Activated CD8-positive, alpha-beta T cell treated with anti-CD3 and anti-CD28 coated beads for 36 hours (primary cell): ENCODE measurements at regions of chr4 and their contacts with region 1.

Region 1: DNA sequence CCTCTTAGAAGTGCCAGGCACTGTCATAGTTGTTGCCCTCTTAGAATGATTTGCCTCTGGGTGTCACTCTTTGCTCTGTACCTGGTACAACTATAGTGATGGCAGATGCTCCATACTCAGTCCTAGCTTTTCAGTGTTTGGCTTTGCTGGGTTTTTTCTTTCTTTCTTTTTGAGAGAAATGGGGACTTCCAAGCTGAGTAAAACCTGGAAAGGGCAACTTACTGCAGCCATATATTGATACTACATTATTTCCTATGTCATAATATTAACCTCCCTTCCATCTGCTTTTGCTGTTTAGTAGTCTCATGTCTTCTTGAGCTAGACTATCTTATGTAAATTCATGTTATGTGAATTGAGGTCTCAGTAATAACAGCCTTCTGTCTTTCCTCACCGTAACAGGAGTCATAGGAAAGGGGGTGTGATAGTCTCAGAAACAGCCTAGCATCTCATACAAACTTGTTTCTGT is 49.0 kb downstream of the NIPAL1 start:
- DNase-seq: no peak
- ATAC-seq: peak; percentile 81
- H3K4me3 Mint-ChIP-seq: no peak overlapping the region
- H3K27ac Mint-ChIP-seq: peak overlapping the region; percentile 55
- H3K4me1 Mint-ChIP-seq: peaks cover 34% of the 10 kb centered on the region
- H3K27me3 Mint-ChIP-seq: no peaks in the 10 kb centered on the region
- CTCF ChIP-seq: no peak

Region 2: DNA sequence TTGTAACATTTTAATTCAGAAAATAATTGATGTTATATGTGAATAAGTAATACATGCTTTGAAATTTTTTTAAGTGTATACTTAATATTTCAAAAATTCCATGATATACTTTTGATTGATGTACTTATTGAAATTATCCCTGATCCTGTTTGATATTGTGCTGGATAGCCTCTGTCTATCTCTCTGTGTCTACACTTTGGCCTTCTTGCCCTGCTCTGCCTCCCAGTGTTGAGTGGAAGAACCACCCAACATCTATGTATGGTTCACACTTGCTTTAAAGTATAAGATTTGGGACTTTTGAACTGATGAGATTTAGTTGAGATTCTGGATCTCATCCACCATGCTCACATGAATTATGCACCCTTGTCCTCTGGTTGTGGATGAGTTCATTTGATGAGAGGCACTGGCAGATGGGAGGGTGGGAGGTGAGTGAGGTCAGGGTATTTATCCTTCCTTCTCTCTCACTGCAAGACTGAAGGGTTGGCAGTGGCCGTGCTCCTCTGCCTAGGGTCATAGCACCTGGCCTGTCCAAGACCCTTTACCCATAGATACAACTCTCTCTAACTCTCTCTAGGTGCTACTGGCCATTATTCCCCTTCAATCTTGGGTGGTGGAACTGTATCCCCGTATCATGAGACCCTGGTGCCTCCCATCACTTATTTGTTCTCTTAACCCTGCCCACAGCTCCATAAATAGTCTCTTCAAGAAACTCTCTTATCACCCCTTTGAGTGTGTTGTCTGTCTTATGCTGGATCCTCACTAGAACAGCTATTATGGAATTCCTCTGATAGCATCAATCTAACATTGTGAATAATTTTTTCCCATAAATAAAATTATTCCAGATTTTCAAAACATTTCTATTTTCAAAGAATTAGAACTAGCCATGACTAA is 303.0 kb before region 1 on chr4:
- CTCF ChIA-PET with region 1: no interaction called
- POLR2A ChIA-PET with region 1: no interaction called
- intact Hi-C with region 1: no loop called
- DNase-seq: no peak
- ATAC-seq: no peak
- H3K4me3 Mint-ChIP-seq: no peak overlapping the region
- H3K27ac Mint-ChIP-seq: no peak overlapping the region
- H3K4me1 Mint-ChIP-seq: no peaks in the 10 kb centered on the region
- H3K27me3 Mint-ChIP-seq: peaks cover 4% of the 10 kb centered on the region
- CTCF ChIP-seq: no peak

Region 3: DNA sequence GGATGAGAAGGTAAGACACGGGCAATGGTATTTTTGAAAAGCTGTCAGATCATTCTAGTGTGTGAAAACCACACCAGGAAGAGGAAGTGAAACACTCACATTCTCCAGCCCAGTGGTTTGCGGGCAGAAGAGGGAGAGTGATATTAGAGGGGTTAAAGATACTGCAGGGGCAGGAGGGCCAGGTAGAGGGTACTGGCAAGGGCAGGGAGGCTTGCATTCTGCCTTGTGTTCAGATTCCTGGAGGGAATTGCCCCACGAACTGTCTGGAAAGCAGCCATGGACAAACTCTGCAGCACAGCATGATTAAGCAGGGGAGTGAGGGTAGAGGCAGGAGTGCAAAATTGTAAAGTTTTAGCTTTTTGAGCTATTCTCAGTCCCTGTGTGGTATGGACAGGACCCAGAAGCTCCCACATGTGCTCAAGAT is 18.2 kb before region 1 on chr4:
- CTCF ChIA-PET with region 1: interaction called, 33 read pairs
- POLR2A ChIA-PET with region 1: interaction called, 8 read pairs
- intact Hi-C with region 1: loop called (anchors 2 kb)
- DNase-seq: peak; percentile 97
- ATAC-seq: peak; percentile 85
- H3K4me3 Mint-ChIP-seq: peak overlapping the region; percentile 40
- H3K27ac Mint-ChIP-seq: peak overlapping the region; percentile 26
- H3K4me1 Mint-ChIP-seq: peaks cover 60% of the 10 kb centered on the region
- H3K27me3 Mint-ChIP-seq: peaks cover 11% of the 10 kb centered on the region
- CTCF ChIP-seq: no peak

Region 4: DNA sequence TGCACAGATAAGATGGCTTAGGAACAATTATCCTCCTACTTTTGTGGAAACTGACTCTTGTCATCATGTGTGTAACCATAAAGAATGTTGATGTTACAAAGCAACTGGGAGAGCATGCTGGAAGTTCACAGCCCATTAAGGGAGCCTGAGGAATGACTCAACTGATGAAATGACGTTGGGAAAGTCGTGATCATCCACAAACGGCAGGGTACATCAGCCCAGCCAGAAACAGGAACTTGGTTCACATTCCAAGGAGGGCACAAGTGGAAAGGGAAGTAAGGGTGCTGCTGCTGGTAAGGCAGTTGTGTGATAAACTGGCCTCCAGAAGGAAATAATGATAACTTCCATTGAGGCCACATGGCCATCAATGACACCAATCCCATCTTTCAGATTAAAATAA is 197.3 kb after region 1 on chr4:
- CTCF ChIA-PET with region 1: no interaction called
- POLR2A ChIA-PET with region 1: no interaction called
- intact Hi-C with region 1: no loop called
- DNase-seq: no peak
- ATAC-seq: no peak
- H3K4me3 Mint-ChIP-seq: no peak overlapping the region
- H3K27ac Mint-ChIP-seq: no peak overlapping the region
- H3K4me1 Mint-ChIP-seq: peaks cover 14% of the 10 kb centered on the region
- H3K27me3 Mint-ChIP-seq: no peaks in the 10 kb centered on the region
- CTCF ChIP-seq: no peak

Region 5: GRCh38 chr4:48706736-48707135 is 641.1 kb after region 1 on chr4:
- CTCF ChIA-PET with region 1: no interaction called
- POLR2A ChIA-PET with region 1: no interaction called
- intact Hi-C with region 1: no loop called
- DNase-seq: peak; percentile 12
- ATAC-seq: peak; percentile 42
- H3K4me3 Mint-ChIP-seq: no peak overlapping the region
- H3K27ac Mint-ChIP-seq: no peak overlapping the region
- H3K4me1 Mint-ChIP-seq: peaks cover 35% of the 10 kb centered on the region
- H3K27me3 Mint-ChIP-seq: no peaks in the 10 kb centered on the region
- CTCF ChIP-seq: no peak